ENCODE measurements at regions of chr3 and their contacts with region 1.

Region 1: GRCh38 chr3:178966299-178967176 is 105.1 kb downstream of the ZMAT3 start:
- DNase-seq: no peak
- H3K4me3 ChIP-seq: no peak overlapping the region
- H3K27ac ChIP-seq: no peak overlapping the region
- H3K4me1 ChIP-seq: peaks cover under 1% of the 10 kb centered on the region
- H3K27me3 ChIP-seq: no peaks in the 10 kb centered on the region
- CTCF ChIP-seq: peak in 2 of 3 experiments; percentile 32 to 54

Region 2: GRCh38 chr3:178436773-178437172 is 529.8 kb before region 1 on chr3:
- dilution Hi-C with region 1: loop called (anchors 25 kb)
- DNase-seq: no peak
- H3K4me3 ChIP-seq: no peak overlapping the region
- H3K27ac ChIP-seq: no peak overlapping the region
- H3K4me1 ChIP-seq: no peaks in the 10 kb centered on the region
- H3K27me3 ChIP-seq: no peaks in the 10 kb centered on the region
- CTCF ChIP-seq: peak in 2 of 3 experiments; percentile 35 to 40

Region 3: GRCh38 chr3:178690571-178690970 is 276.0 kb before region 1 on chr3:
- dilution Hi-C with region 1: no loop called
- DNase-seq: no peak
- H3K4me3 ChIP-seq: no peak overlapping the region
- H3K27ac ChIP-seq: no peak overlapping the region
- H3K4me1 ChIP-seq: no peaks in the 10 kb centered on the region
- H3K27me3 ChIP-seq: no peaks in the 10 kb centered on the region
- CTCF ChIP-seq: no peak

Region 4: DNA sequence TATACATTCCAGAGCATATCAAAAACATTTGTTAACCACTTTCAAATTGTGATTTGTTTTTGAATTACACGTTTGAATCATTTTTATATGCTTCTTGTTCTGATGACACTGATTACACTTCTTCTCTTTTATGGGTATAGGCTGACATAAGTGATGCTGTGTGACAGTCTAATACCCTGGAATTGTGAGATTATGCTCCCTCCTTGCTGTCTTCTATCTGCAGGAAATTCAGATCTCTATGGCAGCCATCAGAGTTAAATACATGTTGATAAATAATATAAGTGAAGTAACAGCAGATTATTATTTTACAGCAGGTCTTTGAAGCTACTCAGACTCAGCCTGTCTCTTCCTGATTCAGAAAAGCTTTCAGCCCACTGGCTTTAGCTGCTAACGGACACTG is 143.8 kb before region 1 on chr3:
- dilution Hi-C with region 1: no loop called
- DNase-seq: no peak
- H3K4me3 ChIP-seq: no peak overlapping the region
- H3K27ac ChIP-seq: no peak overlapping the region
- H3K4me1 ChIP-seq: no peaks in the 10 kb centered on the region
- H3K27me3 ChIP-seq: no peaks in the 10 kb centered on the region
- CTCF ChIP-seq: no peak

Measured in keratinocyte (primary cell).